Mammary epithelial cell (primary cell): ENCODE measurements at regions of chr12 and their contacts with region 1.

Region 1: DNA sequence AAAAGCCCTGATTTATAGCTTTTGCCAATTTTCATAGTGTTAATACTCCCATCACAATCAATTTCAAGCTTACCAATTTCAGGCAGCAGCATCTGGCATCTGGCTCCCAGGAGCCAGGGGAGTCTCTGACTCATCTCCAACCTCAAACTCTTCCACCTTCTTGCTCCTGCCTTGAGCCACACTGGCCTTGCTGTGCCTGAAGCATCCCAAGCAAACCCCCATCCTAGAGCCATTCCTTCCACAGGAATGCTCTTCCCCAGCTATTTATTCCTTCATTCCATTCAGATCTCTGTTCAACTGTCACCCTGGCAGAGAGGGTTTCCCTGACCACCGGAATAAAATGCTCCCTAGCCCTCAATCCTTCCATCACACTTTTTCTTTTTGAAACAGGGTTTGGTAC is 13.9 kb upstream of the PPP1CC start:
- DNase-seq: peak; percentile 37
- H3K4me3 ChIP-seq: no peak overlapping the region
- H3K27ac ChIP-seq: no peak overlapping the region
- H3K4me1 ChIP-seq: no peaks in the 10 kb centered on the region
- H3K27me3 ChIP-seq: no peaks in the 10 kb centered on the region
- CTCF ChIP-seq: no peak

Region 2: GRCh38 chr12:110802489-110802888 is 45.9 kb after region 1 on chr12:
- CTCF ChIA-PET with region 1: no interaction called
- dilution Hi-C with region 1: loop called (anchors 5 kb)
- in situ Hi-C with region 1: no loop called
- intact Hi-C with region 1: no loop called
- DNase-seq: no peak
- H3K4me3 ChIP-seq: no peak overlapping the region
- H3K27ac ChIP-seq: no peak overlapping the region
- H3K4me1 ChIP-seq: peaks cover 2% of the 10 kb centered on the region
- H3K27me3 ChIP-seq: no peaks in the 10 kb centered on the region
- CTCF ChIP-seq: no peak